Activated CD4-positive, alpha-beta memory T cell treated with anti-CD3 and anti-CD28 coated beads, Interleukin-2, amount 10 ng/mL, durations not matched to agents 7 days and 5 days (primary cell): ENCODE measurements at regions of chr6 and their contacts with region 1.

Region 1: GRCh38 chr6:151357758-151358436 is 33.5 kb downstream of the ZBTB2 start:
- DNase-seq: no peak
- H3K4me3 Mint-ChIP-seq: no peak overlapping the region
- H3K27ac Mint-ChIP-seq: no peak overlapping the region
- H3K4me1 Mint-ChIP-seq: peaks cover 15% of the 10 kb centered on the region
- H3K27me3 Mint-ChIP-seq: no peaks in the 10 kb centered on the region

Region 2: DNA sequence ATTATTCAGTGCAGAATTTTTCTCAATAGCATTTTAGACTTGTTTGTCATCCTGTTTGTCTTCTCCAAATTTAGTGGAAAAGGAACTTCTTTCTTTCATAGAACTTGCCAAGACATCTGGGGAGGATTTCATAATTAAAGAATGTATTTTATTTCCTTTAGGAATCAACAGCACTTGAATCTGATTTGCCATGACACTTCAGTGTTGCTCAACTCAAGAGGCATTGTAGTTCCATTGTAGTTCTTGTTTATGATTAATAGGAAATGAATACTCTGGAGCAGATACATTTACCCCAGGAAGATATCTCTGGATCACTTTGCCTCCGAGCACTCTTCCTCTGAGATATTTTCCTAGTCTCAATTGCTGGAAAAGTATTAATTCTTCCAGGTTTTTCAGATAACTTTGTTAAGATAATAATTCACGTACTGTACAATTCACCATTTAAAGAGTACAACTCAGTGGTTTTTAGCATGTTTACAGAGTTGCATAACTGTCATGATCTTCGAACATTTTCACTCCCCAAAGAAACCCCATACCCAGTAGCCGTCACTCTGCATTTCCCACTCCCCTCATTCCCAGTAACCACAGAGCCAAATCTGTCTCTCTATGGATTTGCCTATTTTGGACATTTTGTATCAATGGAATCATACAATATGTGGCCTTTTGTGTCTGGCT is 88.4 kb before region 1 on chr6:
- CTCF ChIA-PET with region 1: no interaction called
- POLR2A ChIA-PET with region 1: no interaction called
- DNase-seq: no peak
- H3K4me3 Mint-ChIP-seq: no peak overlapping the region
- H3K27ac Mint-ChIP-seq: no peak overlapping the region
- H3K4me1 Mint-ChIP-seq: no peaks in the 10 kb centered on the region
- H3K27me3 Mint-ChIP-seq: peaks cover 37% of the 10 kb centered on the region

Region 3: GRCh38 chr6:151330134-151330696 is 27.7 kb before region 1 on chr6:
- CTCF ChIA-PET with region 1: interaction called, 11 read pairs
- POLR2A ChIA-PET with region 1: no interaction called
- DNase-seq: no peak
- H3K4me3 Mint-ChIP-seq: no peak overlapping the region
- H3K27ac Mint-ChIP-seq: no peak overlapping the region
- H3K4me1 Mint-ChIP-seq: peaks cover 8% of the 10 kb centered on the region
- H3K27me3 Mint-ChIP-seq: peaks cover 41% of the 10 kb centered on the region

Region 4: DNA sequence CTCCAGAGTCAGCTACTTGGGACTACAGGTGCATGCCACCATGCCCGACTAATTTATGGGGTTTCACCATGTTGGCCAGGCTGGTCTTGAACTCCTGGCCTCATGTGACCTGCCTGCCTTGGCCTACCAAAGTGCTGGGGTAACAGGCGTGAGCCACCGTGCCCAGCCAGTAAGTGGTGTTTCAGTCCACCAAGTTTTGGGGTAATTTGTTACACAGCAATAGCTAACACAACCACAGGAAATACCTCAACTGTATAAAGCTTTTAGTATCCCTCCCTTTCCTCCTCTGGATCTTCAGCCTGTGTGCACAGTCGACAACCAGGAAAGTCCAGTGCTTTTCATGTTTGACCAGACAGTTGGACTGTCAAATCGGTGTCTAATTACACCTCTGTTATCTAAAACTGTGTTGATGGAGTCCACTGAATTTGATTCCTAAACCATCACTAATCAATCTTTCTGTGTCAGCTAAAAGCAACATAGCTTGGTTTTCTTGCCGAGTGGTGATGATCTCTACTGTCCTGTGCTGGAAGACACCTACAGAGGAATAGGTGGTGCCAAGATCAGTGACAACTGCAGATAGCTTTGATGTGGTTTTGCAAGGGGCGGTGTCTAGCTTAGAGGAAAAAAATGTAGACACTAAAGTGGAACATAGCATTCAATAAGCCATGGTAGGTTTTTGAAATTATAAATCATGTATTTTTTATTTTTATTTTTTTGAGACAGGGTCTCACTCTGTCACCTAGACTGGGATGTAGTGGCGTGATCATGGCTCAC is 55.7 kb after region 1 on chr6:
- CTCF ChIA-PET with region 1: no interaction called
- POLR2A ChIA-PET with region 1: no interaction called
- DNase-seq: peak; percentile 65
- H3K4me3 Mint-ChIP-seq: no peak overlapping the region
- H3K27ac Mint-ChIP-seq: peak overlapping the region; percentile 68
- H3K4me1 Mint-ChIP-seq: peaks cover 17% of the 10 kb centered on the region
- H3K27me3 Mint-ChIP-seq: no peaks in the 10 kb centered on the region